Activated CD4-positive, alpha-beta T cell treated with anti-CD3 and anti-CD28 coated beads for 36 hours (primary cell): ENCODE measurements at regions of chr18 and their contacts with region 1.

Region 1: GRCh38 chr18:35095983-35096676 is 54.9 kb downstream of the MAPRE2 start:
- DNase-seq: no peak
- ATAC-seq: peak; percentile 89
- H3K4me3 Mint-ChIP-seq: no peak overlapping the region
- H3K27ac Mint-ChIP-seq: peak overlapping the region; percentile 80
- H3K4me1 Mint-ChIP-seq: peaks cover 31% of the 10 kb centered on the region
- H3K27me3 Mint-ChIP-seq: no peaks in the 10 kb centered on the region

Region 2: GRCh38 chr18:34976899-34977837 is 119.0 kb before region 1 on chr18:
- CTCF ChIA-PET with region 1: no interaction called
- POLR2A ChIA-PET with region 1: no interaction called
- intact Hi-C with region 1: loop called in 1 of 2 experiments (anchors 2 kb)
- DNase-seq: peak; percentile 85
- ATAC-seq: peak; percentile 55
- H3K4me3 Mint-ChIP-seq: peak overlapping the region; percentile 73
- H3K27ac Mint-ChIP-seq: no peak overlapping the region
- H3K4me1 Mint-ChIP-seq: peaks cover 23% of the 10 kb centered on the region
- H3K27me3 Mint-ChIP-seq: peaks cover 32% of the 10 kb centered on the region

Region 3: GRCh38 chr18:35050028-35050546 is 46.0 kb before region 1 on chr18:
- CTCF ChIA-PET with region 1: interaction called, 5 read pairs
- POLR2A ChIA-PET with region 1: no interaction called
- intact Hi-C with region 1: loop called in 1 of 2 experiments (anchors 2 kb)
- DNase-seq: no peak
- ATAC-seq: peak; percentile 83
- H3K4me3 Mint-ChIP-seq: peak overlapping the region; percentile 57
- H3K27ac Mint-ChIP-seq: peak overlapping the region; percentile 86
- H3K4me1 Mint-ChIP-seq: peaks cover 74% of the 10 kb centered on the region
- H3K27me3 Mint-ChIP-seq: no peaks in the 10 kb centered on the region

Region 4: DNA sequence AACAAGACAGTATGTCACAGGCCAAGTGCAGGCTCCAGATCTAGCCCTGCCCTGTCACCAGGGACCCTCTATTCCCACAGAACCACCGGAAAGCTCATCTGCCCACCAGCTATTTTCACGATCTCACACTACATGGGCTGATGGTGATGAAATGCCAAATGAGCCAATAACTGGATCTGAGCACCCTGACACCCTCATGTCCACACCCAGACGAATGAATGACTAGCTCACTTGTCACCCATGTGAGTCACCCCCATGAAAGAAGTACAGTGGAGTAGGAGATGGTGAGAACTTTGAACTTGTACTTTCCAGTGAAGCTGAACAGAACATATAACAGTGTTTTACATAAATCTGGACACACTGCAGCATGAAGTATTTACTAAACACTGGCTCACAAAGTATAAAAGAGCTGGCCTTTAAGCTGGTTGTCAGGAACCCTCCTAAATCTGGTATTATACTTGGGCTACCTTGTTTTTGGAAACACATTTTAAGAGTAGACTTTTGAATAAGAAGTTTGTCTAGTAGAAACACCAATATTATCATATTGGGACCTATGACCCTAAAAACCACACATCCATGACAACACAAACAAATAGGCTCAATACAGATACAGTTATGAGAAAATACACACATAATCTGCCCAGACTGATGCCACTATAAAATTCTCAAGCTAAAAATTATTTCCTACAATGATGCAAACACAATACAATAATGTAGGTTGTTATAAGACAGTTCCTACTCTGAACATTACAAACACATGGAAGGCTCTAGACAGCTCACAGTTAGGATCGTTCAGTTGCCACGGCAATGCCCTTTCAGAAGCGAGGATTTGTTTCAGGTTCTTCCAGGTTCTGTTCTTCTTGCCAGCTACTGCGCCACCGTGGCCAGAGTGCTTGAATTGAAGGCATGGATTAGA is 382.6 kb after region 1 on chr18:
- CTCF ChIA-PET with region 1: no interaction called
- POLR2A ChIA-PET with region 1: no interaction called
- intact Hi-C with region 1: loop called in 1 of 2 experiments (anchors 5 kb)
- DNase-seq: peak; percentile 65
- ATAC-seq: peak; percentile 100
- H3K4me3 Mint-ChIP-seq: peak overlapping the region; percentile 22
- H3K27ac Mint-ChIP-seq: peak overlapping the region; percentile 55
- H3K4me1 Mint-ChIP-seq: peaks cover 40% of the 10 kb centered on the region
- H3K27me3 Mint-ChIP-seq: no peaks in the 10 kb centered on the region